CD4-positive, alpha-beta memory T cell (primary cell): ENCODE measurements at regions of chr11 and their contacts with region 1.

Region 1: GRCh38 chr11:108497317-108498045 is 703 bp downstream of the POGLUT3 start:
- DNase-seq: peak; percentile 73 to 88 (median 77)
- H3K4me3 ChIP-seq: peak overlapping the region; percentile 54 to 77
- H3K4me3 Mint-ChIP-seq: peak overlapping the region; percentile 97 to 100 (median 100)
- H3K27ac ChIP-seq: peak overlapping the region; percentile 90
- H3K27ac Mint-ChIP-seq: peak overlapping the region; percentile 93 to 100 (median 100)
- H3K4me1 ChIP-seq: peaks cover 11% of the 10 kb centered on the region
- H3K4me1 Mint-ChIP-seq: peaks cover 19 to 32% (median 28%) of the 10 kb centered on the region in 4 donors
- H3K27me3 ChIP-seq: no peaks in the 10 kb centered on the region
- H3K27me3 Mint-ChIP-seq: no peaks in the 10 kb centered on the region

Region 2: DNA sequence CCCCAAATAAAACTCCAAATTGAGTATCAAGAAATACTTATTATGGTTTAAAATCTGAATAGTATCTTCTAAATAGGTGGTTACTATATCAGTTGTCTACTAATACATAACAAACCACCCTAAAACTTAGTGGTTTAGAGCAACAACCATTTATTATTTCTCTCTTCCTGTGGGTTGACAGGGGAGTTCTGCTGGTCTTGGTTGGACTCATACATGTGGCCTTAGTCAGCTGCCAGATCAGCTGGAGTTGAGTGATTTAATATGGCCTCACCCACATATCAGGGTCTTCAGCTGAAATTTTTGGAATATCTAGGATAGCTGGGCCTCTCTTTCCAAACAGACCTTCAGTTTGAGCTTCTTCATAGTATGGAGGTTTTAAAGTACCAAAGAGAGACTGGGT is 64.7 kb before region 1 on chr11:
- CTCF ChIA-PET with region 1: no interaction called
- POLR2A ChIA-PET with region 1: no interaction called
- intact Hi-C with region 1: no loop called
- DNase-seq: no peak
- H3K4me3 ChIP-seq: no peak overlapping the region
- H3K4me3 Mint-ChIP-seq: no peak overlapping the region
- H3K27ac ChIP-seq: no peak overlapping the region
- H3K27ac Mint-ChIP-seq: no peak overlapping the region
- H3K4me1 ChIP-seq: no peaks in the 10 kb centered on the region
- H3K4me1 Mint-ChIP-seq: no peaks in the 10 kb centered on the region
- H3K27me3 ChIP-seq: no peaks in the 10 kb centered on the region
- H3K27me3 Mint-ChIP-seq: peaks cover 0 to 4% of the 10 kb centered on the region in 2 donors

Region 3: DNA sequence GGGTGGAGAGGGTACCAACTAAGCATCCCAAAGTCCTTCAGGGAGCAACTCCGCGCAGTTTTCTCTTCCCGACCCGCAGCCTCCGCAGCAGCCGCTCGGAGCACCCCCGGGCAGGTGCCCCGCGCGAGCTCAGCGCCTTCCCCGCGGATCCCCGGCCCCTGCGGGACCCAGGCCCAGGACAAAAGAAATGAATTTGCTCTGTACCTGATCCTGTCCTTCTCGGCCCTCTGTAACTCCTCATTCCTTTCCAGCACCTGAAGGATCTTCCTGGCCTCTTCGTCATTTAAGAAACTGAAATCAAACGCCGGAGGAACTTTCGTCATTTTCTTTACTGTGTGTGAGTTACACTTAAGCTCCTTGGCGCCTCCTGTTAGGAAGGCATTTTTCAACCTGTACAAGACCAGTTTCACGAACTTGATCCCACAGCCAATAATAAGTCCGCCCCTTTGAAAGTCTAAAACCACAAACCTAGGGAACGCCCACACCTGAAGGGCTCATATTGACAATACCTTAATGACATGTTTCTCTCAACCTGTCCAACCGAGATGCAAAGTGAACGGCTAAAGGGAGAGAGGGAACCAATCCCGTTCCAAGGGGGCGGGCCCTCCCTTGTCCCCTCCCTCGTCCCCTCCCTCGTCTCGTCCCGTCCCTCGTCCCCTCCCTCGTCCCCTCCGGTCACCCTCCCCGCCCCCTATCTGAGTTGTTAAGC is 95.9 kb after region 1 on chr11 and contains the start of gene EXPH5:
- CTCF ChIA-PET with region 1: no interaction called
- POLR2A ChIA-PET with region 1: no interaction called
- intact Hi-C with region 1: loop called (anchors 1 kb)
- DNase-seq: peak; percentile 82 to 89 (median 86)
- H3K4me3 ChIP-seq: peak within 1 kb of the TSS; percentile 83 to 89
- H3K4me3 Mint-ChIP-seq: peak within 1 kb of the TSS; percentile 95 to 100 (median 97)
- H3K27ac ChIP-seq: peak within 1 kb of the TSS; percentile 45
- H3K27ac Mint-ChIP-seq: peak within 1 kb of the TSS; percentile 78 to 99 (median 95)
- H3K4me1 ChIP-seq: peaks cover 9% of the 10 kb centered on the region
- H3K4me1 Mint-ChIP-seq: peaks cover 17 to 23% (median 18%) of the 10 kb centered on the region in 4 donors
- H3K27me3 ChIP-seq: peaks cover 6% of the 10 kb centered on the region
- H3K27me3 Mint-ChIP-seq: peaks cover 2 to 3% of the 10 kb centered on the region in 2 donors
- total RNA-seq, gene EXPH5: 2.6 to 4.0 TPM

Region 4: GRCh38 chr11:108635071-108635470 is 137.6 kb after region 1 on chr11:
- CTCF ChIA-PET with region 1: no interaction called
- POLR2A ChIA-PET with region 1: no interaction called
- intact Hi-C with region 1: no loop called
- DNase-seq: no peak
- H3K4me3 ChIP-seq: no peak overlapping the region
- H3K4me3 Mint-ChIP-seq: no peak overlapping the region
- H3K27ac ChIP-seq: no peak overlapping the region
- H3K27ac Mint-ChIP-seq: no peak overlapping the region
- H3K4me1 ChIP-seq: no peaks in the 10 kb centered on the region
- H3K4me1 Mint-ChIP-seq: peaks cover 0 to 3% (median 3%) of the 10 kb centered on the region in 4 donors
- H3K27me3 ChIP-seq: no peaks in the 10 kb centered on the region
- H3K27me3 Mint-ChIP-seq: peaks cover 13% of the 10 kb centered on the region in 2 donors

Region 5: DNA sequence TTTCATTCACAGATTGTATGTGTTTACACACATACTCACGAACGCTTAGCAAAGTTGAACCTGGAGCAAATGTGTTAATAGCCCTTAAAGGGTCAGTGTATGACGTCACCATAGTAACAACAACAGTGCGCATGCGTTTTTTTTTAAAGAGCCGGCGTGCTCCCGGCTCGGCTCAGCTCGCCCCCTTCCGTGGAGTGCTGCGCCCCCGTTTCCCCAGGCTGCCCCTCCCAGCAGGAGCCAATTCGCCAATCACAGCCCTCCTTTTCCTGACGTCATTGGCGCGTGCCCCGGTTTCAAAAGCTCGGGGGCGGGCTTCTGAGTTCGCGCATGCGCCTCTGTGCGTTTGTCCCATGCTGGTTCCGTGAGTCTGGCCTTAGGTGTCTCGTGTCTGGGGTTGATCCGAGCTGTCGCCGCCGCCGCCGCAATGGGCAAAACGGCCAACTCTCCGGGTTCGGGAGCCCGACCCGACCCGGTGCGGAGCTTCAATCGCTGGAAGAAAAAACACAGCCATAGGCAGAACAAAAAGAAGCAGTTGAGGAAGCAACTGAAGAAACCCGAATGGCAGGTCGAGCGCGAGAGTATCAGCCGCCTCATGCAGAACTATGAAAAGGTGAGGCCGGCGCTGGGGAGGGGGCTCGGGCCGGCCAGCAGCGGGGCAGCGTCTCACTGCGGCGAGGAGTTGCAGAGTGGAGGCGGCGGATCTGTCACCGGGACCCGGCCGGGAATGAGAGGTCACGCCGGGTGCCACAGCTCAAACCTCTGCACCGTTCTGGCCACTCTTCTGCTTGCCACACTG is 167.4 kb after region 1 on chr11 and contains the start of gene DDX10:
- CTCF ChIA-PET with region 1: no interaction called
- POLR2A ChIA-PET with region 1: interaction called, 10 read pairs
- intact Hi-C with region 1: loop called (anchors 10 kb)
- DNase-seq: peak; percentile 97 to 99 (median 98)
- H3K4me3 ChIP-seq: peak within 1 kb of the TSS; percentile 66 to 71
- H3K4me3 Mint-ChIP-seq: peak within 1 kb of the TSS; percentile 98 to 100 (median 100)
- H3K27ac ChIP-seq: peak within 1 kb of the TSS; percentile 64
- H3K27ac Mint-ChIP-seq: peak within 1 kb of the TSS; percentile 94 to 100 (median 99)
- H3K4me1 ChIP-seq: peaks cover 32% of the 10 kb centered on the region
- H3K4me1 Mint-ChIP-seq: peaks cover 32 to 56% (median 45%) of the 10 kb centered on the region in 4 donors
- H3K27me3 ChIP-seq: no peaks in the 10 kb centered on the region
- H3K27me3 Mint-ChIP-seq: no peaks in the 10 kb centered on the region
- total RNA-seq, gene DDX10: 17.4 to 18.2 TPM

Region 6: GRCh38 chr11:108825381-108825780 is 327.9 kb after region 1 on chr11:
- CTCF ChIA-PET with region 1: no interaction called
- POLR2A ChIA-PET with region 1: no interaction called
- intact Hi-C with region 1: no loop called
- DNase-seq: no peak
- H3K4me3 ChIP-seq: no peak overlapping the region
- H3K4me3 Mint-ChIP-seq: no peak overlapping the region
- H3K27ac ChIP-seq: no peak overlapping the region
- H3K27ac Mint-ChIP-seq: no peak overlapping the region
- H3K4me1 ChIP-seq: no peaks in the 10 kb centered on the region
- H3K4me1 Mint-ChIP-seq: peaks cover 6 to 14% (median 11%) of the 10 kb centered on the region in 4 donors
- H3K27me3 ChIP-seq: no peaks in the 10 kb centered on the region
- H3K27me3 Mint-ChIP-seq: no peaks in the 10 kb centered on the region